Activated T-helper 1 cell treated with anti-CD3 and anti-CD28 coated beads, Interleukin-12 subunit alpha, Interleukin-12 subunit beta, Interleukin-2, Interleukin-4 antibody, amounts not matched to agents 30 ng/mL and 10 ng/mL and 1 ng/mL, durations not matched to agents 14 hours and 24 hours and 36 hours (primary cell): ENCODE measurements at regions of chr17 and their contacts with region 1.

Region 1: GRCh38 chr17:19766422-19767270 is 18.5 kb upstream of the ALDH3A1 start:
- DNase-seq: peak; percentile 67
- H3K4me3 Mint-ChIP-seq: no peak overlapping the region
- H3K27ac Mint-ChIP-seq: peak overlapping the region; percentile 2
- H3K4me1 Mint-ChIP-seq: peaks cover 40% of the 10 kb centered on the region
- H3K27me3 Mint-ChIP-seq: peaks cover 2% of the 10 kb centered on the region

Region 2: DNA sequence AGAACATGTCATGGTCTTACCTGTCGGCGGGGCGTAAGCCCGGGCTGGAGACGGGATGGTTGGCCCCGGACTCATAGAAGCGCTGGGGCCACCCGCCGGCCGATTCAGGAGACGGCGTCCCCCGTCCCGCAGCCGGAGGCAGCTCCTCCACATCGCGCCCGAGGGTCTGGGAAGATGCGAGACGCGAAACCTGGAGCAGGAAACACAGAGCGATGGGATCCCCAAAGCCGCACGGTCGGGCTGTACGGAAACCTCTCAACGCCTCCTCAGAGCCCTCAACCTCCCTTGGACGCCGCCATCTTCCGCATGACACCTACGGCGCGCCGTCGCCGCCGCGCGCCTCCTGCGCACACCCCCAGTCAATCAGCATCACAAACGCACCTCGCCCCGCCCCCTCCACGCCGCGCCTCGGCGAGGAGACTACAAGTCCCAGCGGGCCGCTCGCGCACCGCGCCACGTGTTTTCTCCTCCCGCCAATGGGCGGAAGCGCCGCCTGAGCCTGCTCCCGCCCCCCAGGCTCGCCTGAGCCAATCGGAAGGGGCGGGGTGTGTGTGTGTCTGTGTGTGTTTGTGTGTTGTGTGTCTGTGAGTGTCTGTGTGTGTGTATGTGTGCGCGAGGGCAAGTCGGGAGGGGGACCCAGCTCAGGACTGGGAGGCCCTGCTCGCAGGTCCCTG is 1727.6 kb before region 1 on chr17 and contains the starts of genes ATPAF2 and GID4:
- intact Hi-C with region 1: no loop called
- DNase-seq: peak; percentile 100
- H3K4me3 Mint-ChIP-seq: peak within 1 kb of the TSS; percentile 100
- H3K27ac Mint-ChIP-seq: peak within 1 kb of the TSS; percentile 99
- H3K4me1 Mint-ChIP-seq: peaks cover 43% of the 10 kb centered on the region
- H3K27me3 Mint-ChIP-seq: no peaks in the 10 kb centered on the region
- total RNA-seq, gene ATPAF2: 34.9 and 37.8 TPM in 2 replicates
- total RNA-seq, gene GID4: 9.6 and 10.0 TPM in 2 replicates

Region 3: GRCh38 chr17:19362277-19363113 is 404.2 kb before region 1 on chr17 and contains the start of gene B9D1:
- intact Hi-C with region 1: loop called (anchors 1 kb)
- DNase-seq: peak; percentile 85
- H3K4me3 Mint-ChIP-seq: peak within 1 kb of the TSS; percentile 87
- H3K27ac Mint-ChIP-seq: peak within 1 kb of the TSS; percentile 67
- H3K4me1 Mint-ChIP-seq: peaks cover 7% of the 10 kb centered on the region
- H3K27me3 Mint-ChIP-seq: peaks cover 16% of the 10 kb centered on the region
- total RNA-seq, gene B9D1: 4.3 and 5.6 TPM in 2 replicates

Region 4: GRCh38 chr17:19513897-19514488 is 252.7 kb before region 1 on chr17:
- intact Hi-C with region 1: loop called (anchors 1 kb)
- DNase-seq: peak; percentile 46
- H3K4me3 Mint-ChIP-seq: no peak overlapping the region
- H3K27ac Mint-ChIP-seq: no peak overlapping the region
- H3K4me1 Mint-ChIP-seq: peaks cover 5% of the 10 kb centered on the region
- H3K27me3 Mint-ChIP-seq: peaks cover 7% of the 10 kb centered on the region

Region 5: DNA sequence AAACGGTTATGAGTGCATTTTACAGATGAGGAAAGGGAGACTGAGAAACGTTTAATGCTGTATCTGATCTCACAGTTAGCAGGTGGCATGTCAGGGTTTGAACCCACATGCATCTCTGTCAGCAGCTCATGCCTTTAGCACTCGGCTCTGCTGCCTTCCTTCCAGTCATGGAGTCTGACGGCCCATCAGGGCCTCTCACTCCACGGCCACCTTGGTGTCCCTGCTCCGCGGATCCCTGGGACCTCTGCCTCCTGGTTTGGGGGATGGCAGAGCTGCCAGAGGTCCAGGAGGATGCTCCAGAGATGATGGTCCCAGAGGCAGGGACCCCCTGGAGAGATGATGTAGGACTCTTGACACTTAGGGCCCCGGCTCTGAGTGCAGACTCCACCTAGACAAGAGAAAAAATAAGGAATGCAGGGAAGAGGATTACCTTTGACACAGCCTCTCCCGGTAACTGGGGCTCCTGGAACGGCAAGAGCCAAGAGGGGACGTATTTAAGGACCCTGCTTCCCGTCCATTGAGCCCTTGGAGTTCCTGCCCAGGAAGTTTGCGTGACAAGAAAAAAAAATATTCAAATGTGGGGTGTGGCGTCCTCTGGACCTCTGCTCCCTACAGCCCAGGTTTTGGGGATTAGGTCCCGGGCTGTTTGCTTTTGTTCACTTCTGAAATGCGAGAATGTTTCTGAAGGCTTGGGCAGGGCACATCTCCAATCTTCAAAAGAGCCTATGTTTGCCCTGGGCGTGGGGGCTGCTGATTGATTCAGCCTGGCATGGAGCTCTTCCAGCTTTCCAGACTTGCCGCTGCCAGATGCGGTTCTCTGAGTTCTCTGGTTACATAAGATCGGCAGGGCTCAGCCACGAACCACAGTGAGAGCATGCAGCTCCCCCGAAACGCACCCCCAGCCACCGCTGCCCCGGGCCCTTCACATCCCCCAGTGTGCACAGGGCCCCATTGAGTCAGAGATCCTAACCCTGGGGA is 18.5 kb before region 1 on chr17 and contains the start of gene ALDH3A1:
- intact Hi-C with region 1: loop called (anchors 2 kb)
- DNase-seq: no peak
- H3K4me3 Mint-ChIP-seq: no peak within 1 kb of the TSS
- H3K27ac Mint-ChIP-seq: no peak within 1 kb of the TSS
- H3K4me1 Mint-ChIP-seq: peaks cover 7% of the 10 kb centered on the region
- H3K27me3 Mint-ChIP-seq: peaks cover 13% of the 10 kb centered on the region
- total RNA-seq, gene ALDH3A1: not detected in 2 replicates

Region 6: DNA sequence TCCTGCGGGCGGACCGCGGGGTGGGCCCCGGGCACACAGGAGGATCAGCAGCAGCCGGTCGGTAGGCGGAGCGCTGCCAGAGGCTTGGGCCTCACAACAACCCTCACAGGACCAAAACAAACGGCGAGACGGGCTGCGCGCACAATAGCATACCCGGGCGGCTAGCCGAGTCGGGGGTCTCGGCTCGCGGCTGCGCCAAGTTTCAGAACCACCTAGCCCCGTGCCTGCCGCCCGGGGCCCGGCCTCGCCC is 100.3 kb after region 1 on chr17:
- intact Hi-C with region 1: loop called (anchors 5 kb)
- DNase-seq: peak; percentile 40
- H3K4me3 Mint-ChIP-seq: peak overlapping the region; percentile 84
- H3K27ac Mint-ChIP-seq: peak overlapping the region; percentile 61
- H3K4me1 Mint-ChIP-seq: peaks cover 10% of the 10 kb centered on the region
- H3K27me3 Mint-ChIP-seq: no peaks in the 10 kb centered on the region

Region 7: GRCh38 chr17:20073055-20073979 is 306.7 kb after region 1 on chr17:
- intact Hi-C with region 1: no loop called
- DNase-seq: no peak
- H3K4me3 Mint-ChIP-seq: peak overlapping the region; percentile 48
- H3K27ac Mint-ChIP-seq: peak overlapping the region; percentile 53
- H3K4me1 Mint-ChIP-seq: peaks cover 25% of the 10 kb centered on the region
- H3K27me3 Mint-ChIP-seq: no peaks in the 10 kb centered on the region